ENCODE measurements at regions of chr3 and their contacts with region 1.

Region 1: GRCh38 chr3:42961633-42962032 is 17.5 kb upstream of the GASK1A start:
- DNase-seq: peak in 4 of 5 donors; percentile 28 to 40 (median 38)
- H3K4me3 ChIP-seq: no peak overlapping the region
- H3K4me3 Mint-ChIP-seq: no peak overlapping the region
- H3K27ac ChIP-seq: no peak overlapping the region
- H3K27ac Mint-ChIP-seq: peak overlapping the region in 1 of 7 donors; percentile 9
- H3K4me1 ChIP-seq: peaks cover 4% of the 10 kb centered on the region
- H3K4me1 Mint-ChIP-seq: peaks cover 10 to 16% (median 14%) of the 10 kb centered on the region in 4 donors
- H3K27me3 ChIP-seq: no peaks in the 10 kb centered on the region
- H3K27me3 Mint-ChIP-seq: peaks cover 1 to 2% of the 10 kb centered on the region in 2 donors

Region 2: DNA sequence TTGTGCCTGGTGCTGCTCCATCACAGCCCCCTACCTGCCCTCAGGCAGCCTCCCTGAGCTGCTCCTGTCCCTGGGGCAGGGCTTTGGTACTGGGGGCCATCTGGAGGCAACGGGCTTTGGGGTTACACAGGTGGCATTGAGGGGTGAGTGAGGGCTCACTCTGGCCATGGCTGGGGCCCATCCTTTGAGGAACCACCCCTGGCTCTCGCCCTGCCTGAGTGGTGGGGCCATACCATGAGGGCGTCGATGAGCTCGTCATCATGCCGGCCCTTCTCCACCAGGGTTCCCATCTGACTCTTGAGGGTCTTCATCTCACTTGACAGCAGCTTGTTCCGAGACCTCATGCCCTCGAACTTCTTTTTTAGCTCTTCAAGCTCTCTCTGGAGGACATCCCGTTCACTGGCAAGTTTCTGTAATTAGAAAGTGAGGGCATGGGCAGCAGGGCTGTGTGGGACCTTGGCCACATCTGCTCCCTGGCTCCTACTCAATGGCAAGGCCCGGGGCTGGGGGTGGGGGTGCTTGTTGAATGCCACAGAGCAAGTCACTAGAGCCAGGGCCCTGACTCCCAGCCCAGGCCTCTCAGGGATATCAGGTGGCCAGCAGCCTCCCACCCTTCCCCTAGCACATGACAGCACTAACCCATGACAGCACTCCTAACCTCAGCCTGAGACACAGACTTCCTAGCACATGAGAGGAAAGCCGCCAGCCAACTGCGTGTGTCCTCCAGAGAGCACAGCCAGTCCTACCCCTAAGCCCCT is 222.1 kb before region 1 on chr3:
- CTCF ChIA-PET with region 1: no interaction called
- POLR2A ChIA-PET with region 1: no interaction called
- intact Hi-C with region 1: no loop called
- DNase-seq: no peak
- H3K4me3 ChIP-seq: no peak overlapping the region
- H3K4me3 Mint-ChIP-seq: peak overlapping the region in 1 of 8 donors; percentile 42
- H3K27ac ChIP-seq: no peak overlapping the region
- H3K27ac Mint-ChIP-seq: no peak overlapping the region
- H3K4me1 ChIP-seq: no peaks in the 10 kb centered on the region
- H3K4me1 Mint-ChIP-seq: peaks cover 0 to 9% (median 6%) of the 10 kb centered on the region in 4 donors
- H3K27me3 ChIP-seq: no peaks in the 10 kb centered on the region
- H3K27me3 Mint-ChIP-seq: no peaks in the 10 kb centered on the region

Region 3: DNA sequence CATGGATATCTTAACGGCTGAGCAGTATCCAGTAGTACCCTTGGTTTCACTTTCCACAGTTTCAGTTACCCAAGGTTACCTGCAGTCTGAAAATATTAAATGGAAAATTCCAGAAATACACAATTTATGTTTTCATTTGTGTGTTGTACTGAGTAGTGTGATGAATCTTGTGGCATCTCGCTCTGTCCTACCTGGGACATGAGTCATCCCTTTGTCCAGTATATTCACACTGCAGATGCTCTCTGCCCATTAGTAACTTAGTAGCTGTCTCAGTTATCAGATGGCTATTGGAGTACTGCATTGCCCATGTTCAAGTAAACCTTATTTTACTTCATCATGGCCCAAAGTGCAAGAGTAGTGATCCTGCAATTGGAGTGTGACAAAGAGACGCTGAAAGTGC is 43.6 kb after region 1 on chr3:
- CTCF ChIA-PET with region 1: interaction called, 12 read pairs
- POLR2A ChIA-PET with region 1: no interaction called
- intact Hi-C with region 1: no loop called
- DNase-seq: no peak
- H3K4me3 ChIP-seq: no peak overlapping the region
- H3K4me3 Mint-ChIP-seq: no peak overlapping the region
- H3K27ac ChIP-seq: no peak overlapping the region
- H3K27ac Mint-ChIP-seq: no peak overlapping the region
- H3K4me1 ChIP-seq: no peaks in the 10 kb centered on the region
- H3K4me1 Mint-ChIP-seq: peaks cover 0 to 15% (median 6%) of the 10 kb centered on the region in 4 donors
- H3K27me3 ChIP-seq: no peaks in the 10 kb centered on the region
- H3K27me3 Mint-ChIP-seq: peaks cover 0 to 2% of the 10 kb centered on the region in 2 donors

Region 4: GRCh38 chr3:43043071-43043766 is 81.6 kb after region 1 on chr3:
- CTCF ChIA-PET with region 1: no interaction called
- POLR2A ChIA-PET with region 1: no interaction called
- intact Hi-C with region 1: no loop called
- DNase-seq: no peak
- H3K4me3 ChIP-seq: no peak overlapping the region
- H3K4me3 Mint-ChIP-seq: no peak overlapping the region
- H3K27ac ChIP-seq: no peak overlapping the region
- H3K27ac Mint-ChIP-seq: no peak overlapping the region
- H3K4me1 ChIP-seq: peaks cover 8% of the 10 kb centered on the region
- H3K4me1 Mint-ChIP-seq: peaks cover 6 to 18% (median 10%) of the 10 kb centered on the region in 4 donors
- H3K27me3 ChIP-seq: no peaks in the 10 kb centered on the region
- H3K27me3 Mint-ChIP-seq: peaks cover 0 to under 1% of the 10 kb centered on the region in 2 donors

Region 5: GRCh38 chr3:43071313-43071893 is 109.8 kb after region 1 on chr3:
- CTCF ChIA-PET with region 1: interaction called, 102 read pairs
- POLR2A ChIA-PET with region 1: no interaction called
- intact Hi-C with region 1: loop called (anchors 2 kb)
- DNase-seq: peak in 3 of 5 donors; percentile 18 to 40 (median 19)
- H3K4me3 ChIP-seq: no peak overlapping the region
- H3K4me3 Mint-ChIP-seq: no peak overlapping the region
- H3K27ac ChIP-seq: no peak overlapping the region
- H3K27ac Mint-ChIP-seq: no peak overlapping the region
- H3K4me1 ChIP-seq: no peaks in the 10 kb centered on the region
- H3K4me1 Mint-ChIP-seq: peaks cover 0 to 6% (median 0%) of the 10 kb centered on the region in 4 donors
- H3K27me3 ChIP-seq: no peaks in the 10 kb centered on the region
- H3K27me3 Mint-ChIP-seq: no peaks in the 10 kb centered on the region

Region 6: GRCh38 chr3:43087249-43087776 is 125.7 kb after region 1 on chr3:
- CTCF ChIA-PET with region 1: interaction called, 23 read pairs
- POLR2A ChIA-PET with region 1: no interaction called
- intact Hi-C with region 1: loop called (anchors 1 kb)
- DNase-seq: no peak
- H3K4me3 ChIP-seq: no peak overlapping the region
- H3K4me3 Mint-ChIP-seq: no peak overlapping the region
- H3K27ac ChIP-seq: no peak overlapping the region
- H3K27ac Mint-ChIP-seq: no peak overlapping the region
- H3K4me1 ChIP-seq: no peaks in the 10 kb centered on the region
- H3K4me1 Mint-ChIP-seq: peaks cover 0 to 2% (median 0%) of the 10 kb centered on the region in 4 donors
- H3K27me3 ChIP-seq: no peaks in the 10 kb centered on the region
- H3K27me3 Mint-ChIP-seq: no peaks in the 10 kb centered on the region

Region 7: GRCh38 chr3:43378066-43378935 is 416.7 kb after region 1 on chr3:
- CTCF ChIA-PET with region 1: interaction called, 23 read pairs
- POLR2A ChIA-PET with region 1: no interaction called
- intact Hi-C with region 1: loop called (anchors 1 kb)
- DNase-seq: peak; percentile 71 to 76 (median 73)
- H3K4me3 ChIP-seq: no peak overlapping the region
- H3K4me3 Mint-ChIP-seq: peak overlapping the region in 2 of 8 donors; percentile 11 to 14
- H3K27ac ChIP-seq: no peak overlapping the region
- H3K27ac Mint-ChIP-seq: peak overlapping the region in 6 of 7 donors; percentile 38 to 84 (median 69)
- H3K4me1 ChIP-seq: peaks cover 9% of the 10 kb centered on the region
- H3K4me1 Mint-ChIP-seq: peaks cover 9 to 26% (median 17%) of the 10 kb centered on the region in 4 donors
- H3K27me3 ChIP-seq: no peaks in the 10 kb centered on the region
- H3K27me3 Mint-ChIP-seq: no peaks in the 10 kb centered on the region

Region 8: DNA sequence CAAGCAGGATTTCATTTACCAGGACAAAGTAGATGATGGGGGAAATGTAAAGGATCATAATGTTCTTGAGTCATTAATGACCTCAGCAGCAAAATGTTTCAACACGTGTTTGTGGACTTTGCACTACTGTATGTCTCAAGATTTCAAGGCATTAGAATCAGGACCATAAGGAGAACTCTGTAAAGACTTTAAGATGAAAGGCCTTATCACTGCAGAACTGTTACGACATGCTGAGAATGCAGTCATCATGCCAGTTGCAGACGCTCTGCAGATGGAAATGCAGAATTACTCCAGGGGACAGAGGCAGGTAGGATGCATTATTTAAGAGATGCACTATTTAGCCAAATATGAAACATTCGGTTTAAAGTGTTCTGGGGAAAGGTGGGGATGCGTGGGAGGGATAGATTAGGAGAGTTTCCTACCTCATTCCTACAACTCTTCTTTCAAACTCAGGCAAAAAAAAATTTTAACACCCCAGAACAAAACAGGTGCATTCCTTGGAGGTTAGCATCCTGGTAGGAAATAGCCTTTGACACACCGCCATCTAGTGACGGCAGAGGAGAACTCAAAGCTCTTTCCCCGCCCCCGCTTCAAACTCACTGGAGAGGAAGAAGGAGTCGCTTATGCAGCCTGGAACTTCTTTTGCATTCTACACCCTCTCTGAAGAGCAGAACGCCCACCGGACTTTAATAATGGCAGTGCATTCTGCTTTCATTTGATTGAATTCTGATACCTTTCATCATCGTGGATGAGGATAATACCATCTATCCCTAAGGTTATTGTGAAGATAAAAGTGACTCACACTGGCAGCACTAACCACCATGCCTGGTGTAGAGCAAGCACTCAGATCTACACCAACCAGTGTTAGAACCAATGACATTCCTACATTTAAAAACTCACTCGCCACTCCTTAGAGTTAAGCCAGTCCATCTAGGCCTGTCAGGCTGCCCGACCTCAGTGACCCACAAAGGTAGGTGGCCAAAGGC is 1236.9 kb after region 1 on chr3:
- CTCF ChIA-PET with region 1: interaction called, 3 read pairs
- POLR2A ChIA-PET with region 1: no interaction called
- intact Hi-C with region 1: loop called (anchors 5 kb)
- DNase-seq: peak; percentile 52 to 62 (median 56)
- H3K4me3 ChIP-seq: no peak overlapping the region
- H3K4me3 Mint-ChIP-seq: no peak overlapping the region
- H3K27ac ChIP-seq: no peak overlapping the region
- H3K27ac Mint-ChIP-seq: no peak overlapping the region
- H3K4me1 ChIP-seq: no peaks in the 10 kb centered on the region
- H3K4me1 Mint-ChIP-seq: peaks cover 0 to 6% (median under 1%) of the 10 kb centered on the region in 4 donors
- H3K27me3 ChIP-seq: no peaks in the 10 kb centered on the region
- H3K27me3 Mint-ChIP-seq: peaks cover 5 to 18% of the 10 kb centered on the region in 2 donors

Measured in CD4-positive, alpha-beta memory T cell (primary cell).